T-cell (primary cell): ENCODE measurements at regions of chr10 and their contacts with region 1.

Region 1: GRCh38 chr10:34575882-34576281 is 239.2 kb downstream of the PARD3 start:
- DNase-seq: no peak
- ATAC-seq: no peak
- H3K4me3 ChIP-seq: no peak overlapping the region
- H3K4me3 Mint-ChIP-seq: no peak overlapping the region
- H3K27ac ChIP-seq: no peak overlapping the region
- H3K27ac Mint-ChIP-seq: no peak overlapping the region
- H3K4me1 ChIP-seq: no peaks in the 10 kb centered on the region
- H3K4me1 Mint-ChIP-seq: no peaks in the 10 kb centered on the region
- H3K27me3 ChIP-seq: peaks cover 0 to 4% of the 10 kb centered on the region in 2 experiments
- H3K27me3 Mint-ChIP-seq: peaks cover 0 to 2% of the 10 kb centered on the region in 2 donors

Region 2: GRCh38 chr10:34319197-34319866 is 256.6 kb before region 1 on chr10:
- CTCF ChIA-PET with region 1: interaction called in 1 of 2 experiments, 14 read pairs
- POLR2A ChIA-PET with region 1: no interaction called
- DNase-seq: no peak
- ATAC-seq: no peak
- H3K4me3 ChIP-seq: no peak overlapping the region
- H3K4me3 Mint-ChIP-seq: no peak overlapping the region
- H3K27ac ChIP-seq: no peak overlapping the region
- H3K27ac Mint-ChIP-seq: no peak overlapping the region
- H3K4me1 ChIP-seq: peaks cover 0 to 6% of the 10 kb centered on the region in 2 experiments
- H3K4me1 Mint-ChIP-seq: peaks cover 0 to 2% (median 2%) of the 10 kb centered on the region in 3 donors
- H3K27me3 ChIP-seq: no peaks in the 10 kb centered on the region
- H3K27me3 Mint-ChIP-seq: peaks cover 0 to 3% of the 10 kb centered on the region in 2 donors

Region 3: DNA sequence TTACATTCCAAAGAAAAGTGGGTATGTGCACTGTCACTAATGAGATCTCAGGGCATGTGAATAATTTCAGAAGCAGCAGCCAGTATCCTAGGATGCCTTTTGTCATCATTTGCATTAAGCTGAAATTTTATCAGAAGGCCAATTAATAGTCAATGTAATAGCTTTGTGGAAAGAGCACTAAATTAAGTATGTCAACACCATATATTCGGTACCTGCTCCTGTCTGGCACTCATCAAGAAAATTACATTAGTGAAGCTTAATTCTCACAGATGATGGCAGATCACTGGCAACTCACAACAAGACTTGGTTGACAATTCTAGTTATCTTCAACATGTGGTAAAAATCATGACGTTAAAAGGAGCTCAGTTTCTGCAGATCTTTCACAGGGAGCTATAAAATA is 32.2 kb before region 1 on chr10:
- CTCF ChIA-PET with region 1: no interaction called
- POLR2A ChIA-PET with region 1: no interaction called
- DNase-seq: no peak
- ATAC-seq: no peak
- H3K4me3 ChIP-seq: no peak overlapping the region
- H3K4me3 Mint-ChIP-seq: no peak overlapping the region
- H3K27ac ChIP-seq: no peak overlapping the region
- H3K27ac Mint-ChIP-seq: no peak overlapping the region
- H3K4me1 ChIP-seq: no peaks in the 10 kb centered on the region
- H3K4me1 Mint-ChIP-seq: no peaks in the 10 kb centered on the region
- H3K27me3 ChIP-seq: no peaks in the 10 kb centered on the region
- H3K27me3 Mint-ChIP-seq: peaks cover 0 to 4% of the 10 kb centered on the region in 2 donors